ENCODE measurements at regions of chr14 and their contacts with region 1.

Region 1: GRCh38 chr14:36852981-36853691 is 191.5 kb downstream of the PAX9 start:
- DNase-seq: no peak
- ATAC-seq: peak; percentile 82

Region 2: GRCh38 chr14:36227802-36228201 is 625.3 kb before region 1 on chr14:
- intact Hi-C with region 1: no loop called
- DNase-seq: no peak
- ATAC-seq: no peak

Region 3: DNA sequence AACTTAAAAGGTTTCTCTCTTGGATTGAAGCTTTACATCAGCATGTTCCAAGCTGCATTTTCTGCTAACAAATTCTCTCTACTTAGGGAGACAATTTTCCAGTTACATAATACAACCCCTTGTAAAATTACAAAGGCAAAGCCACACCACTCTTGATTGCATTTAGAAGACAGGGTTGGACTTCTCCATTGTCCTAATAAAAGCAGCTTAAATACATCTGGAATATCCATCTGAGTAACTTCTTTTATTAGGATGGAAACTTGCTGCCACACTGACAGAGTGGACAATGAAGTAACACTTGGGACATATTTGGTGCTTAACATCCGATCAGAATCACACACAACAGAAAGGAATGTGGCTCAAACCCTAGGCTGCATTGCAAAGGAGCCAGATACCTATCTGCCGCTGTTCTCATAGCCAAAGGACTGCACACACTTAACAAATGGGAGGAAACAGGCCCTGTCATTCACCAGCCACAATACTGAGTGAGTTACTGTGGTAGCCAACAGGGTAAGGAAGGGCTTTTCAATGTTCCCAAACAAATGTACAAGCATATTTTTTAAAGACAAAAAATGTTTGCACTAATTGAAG is 34.2 kb before region 1 on chr14:
- intact Hi-C with region 1: loop called (anchors 2 kb)
- DNase-seq: no peak
- ATAC-seq: no peak

Region 4: DNA sequence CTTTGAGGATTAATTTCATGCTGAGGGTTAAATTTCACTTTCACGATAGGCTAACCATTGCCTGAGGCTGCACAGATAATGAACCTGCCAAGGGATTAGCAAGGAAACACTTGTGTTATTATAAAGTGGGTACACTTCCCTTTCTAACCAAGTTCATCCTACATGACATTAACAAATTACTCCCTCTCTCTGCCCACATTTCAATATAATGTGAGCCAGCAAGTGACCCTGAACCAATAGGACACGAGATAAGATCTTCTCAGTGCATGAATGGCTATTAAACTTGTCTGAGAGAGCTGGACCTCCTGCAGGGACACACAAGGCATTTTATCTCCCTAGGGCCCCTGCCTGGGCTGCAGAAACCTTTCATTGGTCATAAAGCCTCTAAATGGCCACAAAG is 18.0 kb before region 1 on chr14:
- intact Hi-C with region 1: no loop called
- DNase-seq: no peak
- ATAC-seq: no peak